Activated CD4-positive, alpha-beta memory T cell treated with anti-CD3 and anti-CD28 coated beads for 36 hours (primary cell): ENCODE measurements at regions of chr2 and their contacts with region 1.

Region 1: DNA sequence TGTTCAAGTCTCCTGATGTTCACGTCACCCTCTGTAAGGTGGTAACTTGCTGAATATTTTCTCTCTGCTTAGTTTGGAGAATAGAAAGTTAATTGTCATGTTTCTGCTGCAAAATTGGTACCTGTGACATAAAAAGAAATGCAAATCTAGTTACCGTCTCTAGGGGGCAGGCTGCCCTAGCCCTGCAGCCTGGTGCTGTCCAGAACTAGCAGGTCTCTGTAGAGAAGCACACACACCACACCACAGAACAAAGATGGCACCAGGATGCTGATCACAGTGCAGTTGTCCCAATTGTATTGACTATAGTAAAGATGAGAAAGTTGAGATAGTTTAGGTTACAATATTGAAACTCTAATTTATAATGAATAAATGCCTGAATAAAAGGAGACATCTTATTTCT is 47.0 kb downstream of the SLC9A4 start:
- DNase-seq: peak; percentile 28
- H3K4me3 Mint-ChIP-seq: no peak overlapping the region
- H3K27ac Mint-ChIP-seq: no peak overlapping the region
- H3K4me1 Mint-ChIP-seq: no peaks in the 10 kb centered on the region
- H3K27me3 Mint-ChIP-seq: no peaks in the 10 kb centered on the region

Region 2: DNA sequence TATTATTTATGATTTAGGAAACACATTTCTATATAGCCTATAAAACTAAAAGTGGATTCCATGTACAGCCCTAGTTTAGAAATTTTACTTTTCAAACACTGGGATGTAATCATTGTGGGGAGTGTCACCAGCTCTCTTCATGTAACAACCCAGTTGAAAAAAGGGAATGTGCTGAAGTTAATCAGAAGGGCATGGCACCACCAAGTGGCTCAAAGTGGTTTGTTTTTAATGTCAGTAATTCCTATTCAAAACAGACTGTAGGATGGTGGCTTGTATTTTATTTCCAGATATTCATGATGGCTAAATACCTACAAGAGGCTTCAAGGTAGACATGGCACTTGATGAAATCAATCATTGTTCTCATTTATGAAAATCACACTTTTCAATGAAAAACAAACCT is 183.7 kb after region 1 on chr2:
- CTCF ChIA-PET with region 1: no interaction called
- POLR2A ChIA-PET with region 1: no interaction called
- intact Hi-C with region 1: loop called (anchors 1 kb)
- DNase-seq: peak; percentile 22
- H3K4me3 Mint-ChIP-seq: no peak overlapping the region
- H3K27ac Mint-ChIP-seq: no peak overlapping the region
- H3K4me1 Mint-ChIP-seq: no peaks in the 10 kb centered on the region
- H3K27me3 Mint-ChIP-seq: no peaks in the 10 kb centered on the region